Activated CD4-positive, alpha-beta memory T cell treated with anti-CD3 and anti-CD28 coated beads, Interleukin-2, amount 10 ng/mL, durations not matched to agents 7 days and 5 days (primary cell): ENCODE measurements at regions of chr1 and their contacts with region 1.

Region 1: DNA sequence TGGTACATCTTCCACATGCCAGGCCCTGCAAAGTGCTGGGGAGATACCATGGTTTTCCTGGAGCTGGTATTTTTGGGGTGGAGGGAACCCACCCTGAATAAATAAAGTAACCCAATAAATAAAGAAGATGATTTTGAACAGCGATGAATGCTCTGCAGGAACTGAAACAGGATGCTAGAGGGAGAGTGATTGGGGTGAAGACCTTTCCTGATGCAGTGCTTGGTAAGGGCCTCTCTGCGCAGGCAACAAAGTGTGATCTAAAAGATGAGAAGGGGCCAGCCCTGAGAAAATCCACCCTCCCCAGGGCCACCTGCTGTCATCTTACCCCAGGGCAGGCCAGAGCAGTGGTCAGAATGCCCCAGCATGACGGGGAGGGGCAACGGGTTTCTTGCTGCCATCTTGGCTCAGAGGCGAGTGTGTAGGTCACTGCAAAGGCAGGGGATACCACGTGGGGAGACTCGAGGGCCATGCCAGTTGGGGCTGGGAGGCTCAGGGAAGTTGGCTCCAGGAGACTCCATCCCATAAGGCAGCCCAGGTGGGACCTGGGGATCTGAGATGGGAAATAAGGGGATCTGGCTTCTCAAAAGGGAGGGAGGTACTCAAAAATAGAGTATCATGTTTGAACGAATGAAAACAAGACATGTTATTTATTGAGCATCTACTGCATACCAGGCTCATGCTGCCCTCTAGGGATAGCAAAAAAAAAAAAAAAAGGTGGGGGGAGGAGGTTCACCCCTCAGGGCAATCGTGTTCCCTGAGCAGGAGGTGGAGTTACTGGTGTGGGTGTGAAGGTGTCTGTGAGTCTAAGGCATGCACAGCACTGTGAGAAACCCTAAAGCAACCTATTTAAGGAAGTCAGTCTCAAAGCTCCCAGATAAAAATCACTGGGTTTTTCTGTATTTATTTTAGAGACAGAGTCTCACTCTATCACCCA is 2.8 kb downstream of the SRARP start:
- DNase-seq: no peak
- H3K4me3 Mint-ChIP-seq: no peak overlapping the region
- H3K27ac Mint-ChIP-seq: no peak overlapping the region
- H3K4me1 Mint-ChIP-seq: peaks cover 8% of the 10 kb centered on the region
- H3K27me3 Mint-ChIP-seq: peaks cover 6% of the 10 kb centered on the region

Region 2: GRCh38 chr1:15788624-15789301 is 218.1 kb before region 1 on chr1:
- CTCF ChIA-PET with region 1: interaction called, 13 read pairs
- POLR2A ChIA-PET with region 1: no interaction called
- DNase-seq: no peak
- H3K4me3 Mint-ChIP-seq: no peak overlapping the region
- H3K27ac Mint-ChIP-seq: no peak overlapping the region
- H3K4me1 Mint-ChIP-seq: peaks cover 2% of the 10 kb centered on the region
- H3K27me3 Mint-ChIP-seq: peaks cover 10% of the 10 kb centered on the region

Region 3: GRCh38 chr1:16122916-16123315 is 116.1 kb after region 1 on chr1:
- CTCF ChIA-PET with region 1: no interaction called
- POLR2A ChIA-PET with region 1: no interaction called
- DNase-seq: peak; percentile 26
- H3K4me3 Mint-ChIP-seq: no peak overlapping the region
- H3K27ac Mint-ChIP-seq: no peak overlapping the region
- H3K4me1 Mint-ChIP-seq: peaks cover 9% of the 10 kb centered on the region
- H3K27me3 Mint-ChIP-seq: no peaks in the 10 kb centered on the region